ENCODE measurements at regions of chr10 and their contacts with region 1.

Region 1: GRCh38 chr10:69004821-69005220 is 16.2 kb downstream of the KIFBP start:
- DNase-seq: peak; percentile 49
- H3K4me3 ChIP-seq: no peak overlapping the region
- H3K27ac ChIP-seq: no peak overlapping the region
- H3K4me1 ChIP-seq: no peaks in the 10 kb centered on the region
- CTCF ChIP-seq: peak; percentile 76

Region 2: DNA sequence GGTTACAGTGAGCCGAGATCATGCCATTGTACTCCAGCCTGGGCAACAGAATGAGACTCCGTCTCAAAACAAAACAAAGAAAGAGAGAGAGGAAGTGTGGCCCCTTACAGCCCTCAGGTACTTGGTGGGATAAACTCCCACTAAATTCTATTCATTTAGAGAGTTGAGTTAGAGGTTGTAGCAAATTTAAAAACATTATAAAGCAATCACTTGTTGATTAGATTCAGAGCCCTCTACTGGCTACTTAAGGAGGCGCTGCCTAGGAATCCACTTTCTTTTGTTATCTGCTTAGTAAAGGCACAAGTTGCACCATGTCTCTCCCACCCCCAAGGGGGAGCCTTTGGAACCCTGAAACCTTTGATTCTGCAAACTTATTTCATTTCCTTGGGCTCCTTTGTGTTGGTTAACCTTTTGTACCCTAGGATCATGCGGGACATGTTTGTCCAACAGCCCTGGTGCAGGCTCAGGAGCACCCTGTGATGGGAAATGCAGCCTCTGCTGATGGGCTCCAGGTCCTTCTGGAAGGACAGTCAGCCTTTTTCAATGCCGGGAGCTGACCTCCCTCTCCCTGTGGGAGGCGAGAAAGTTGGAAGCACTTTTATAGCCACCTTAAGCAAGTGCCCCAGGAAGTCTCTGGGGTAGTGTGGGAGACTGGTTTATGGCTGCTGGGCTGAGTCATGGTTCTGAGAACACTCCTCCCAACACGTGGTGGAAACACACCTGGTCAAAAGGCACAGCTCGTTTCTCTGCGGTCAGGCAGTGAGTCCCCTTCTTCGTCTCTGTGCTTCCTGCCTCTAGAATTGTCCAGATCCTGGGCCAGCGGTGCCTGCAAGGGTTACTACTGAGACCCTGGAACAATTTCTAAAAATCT is 217.6 kb after region 1 on chr10:
- CTCF ChIA-PET with region 1: no interaction called
- POLR2A ChIA-PET with region 1: no interaction called
- intact Hi-C with region 1: loop called (anchors 5 kb)
- DNase-seq: peak; percentile 96
- H3K4me3 ChIP-seq: peak overlapping the region; percentile 45
- H3K27ac ChIP-seq: peak overlapping the region; percentile 74
- H3K4me1 ChIP-seq: peaks cover 36% of the 10 kb centered on the region
- CTCF ChIP-seq: peak; percentile 96

Region 3: GRCh38 chr10:69425511-69426298 is 420.9 kb after region 1 on chr10:
- CTCF ChIA-PET with region 1: no interaction called
- POLR2A ChIA-PET with region 1: no interaction called
- intact Hi-C with region 1: no loop called
- DNase-seq: no peak
- H3K4me3 ChIP-seq: no peak overlapping the region
- H3K27ac ChIP-seq: no peak overlapping the region
- H3K4me1 ChIP-seq: peaks cover 7% of the 10 kb centered on the region
- CTCF ChIP-seq: no peak